Activated naive CD4-positive, alpha-beta T cell treated with anti-CD3 and anti-CD28 coated beads for 36 hours (primary cell): ENCODE measurements at regions of chr4 and their contacts with region 1.

Region 1: GRCh38 chr4:2963175-2963965 is at the starts of genes GRK4 and NOP14:
- DNase-seq: peak; percentile 98
- H3K4me3 Mint-ChIP-seq: peak within 1 kb of the TSS; percentile 80
- H3K27ac Mint-ChIP-seq: peak within 1 kb of the TSS; percentile 85
- H3K4me1 Mint-ChIP-seq: peaks cover 29% of the 10 kb centered on the region
- H3K27me3 Mint-ChIP-seq: no peaks in the 10 kb centered on the region
- total RNA-seq, gene GRK4: 1.3 to 2.1 TPM
- total RNA-seq, gene NOP14: 48.3 to 55.1 TPM

Region 2: DNA sequence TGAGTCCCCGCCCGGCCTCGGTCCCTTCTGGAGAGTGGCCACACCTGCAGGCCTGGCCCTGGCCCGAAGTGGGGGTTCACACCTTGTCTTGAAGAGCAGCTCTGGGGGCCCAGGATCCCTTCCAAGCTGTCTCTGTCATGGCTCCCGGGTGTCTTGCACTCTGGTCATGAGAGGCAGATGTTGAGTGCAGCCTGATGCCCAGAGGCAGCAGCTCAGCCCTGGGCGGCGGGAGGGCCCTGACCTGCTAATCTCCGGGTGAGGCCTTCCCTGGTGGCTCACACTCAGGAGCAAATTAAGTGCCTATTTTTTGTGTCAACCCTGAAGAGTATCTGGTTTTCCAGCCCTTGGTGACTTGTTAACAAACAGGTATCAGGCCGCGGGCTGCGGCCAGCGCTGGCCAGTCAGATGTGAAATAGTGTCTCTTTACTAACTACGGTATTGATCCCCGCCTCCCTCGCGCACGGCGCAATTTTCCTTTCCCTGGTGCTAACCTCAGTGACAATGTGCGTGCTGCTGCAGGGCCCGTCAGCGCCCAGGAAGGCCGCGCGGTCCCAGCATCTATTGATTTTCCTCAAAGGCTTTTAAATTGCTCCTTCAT is 1581.3 kb before region 1 on chr4:
- CTCF ChIA-PET with region 1: no interaction called
- intact Hi-C with region 1: no loop called
- DNase-seq: no peak
- H3K4me3 Mint-ChIP-seq: no peak overlapping the region
- H3K27ac Mint-ChIP-seq: no peak overlapping the region
- H3K4me1 Mint-ChIP-seq: no peaks in the 10 kb centered on the region
- H3K27me3 Mint-ChIP-seq: no peaks in the 10 kb centered on the region

Region 3: DNA sequence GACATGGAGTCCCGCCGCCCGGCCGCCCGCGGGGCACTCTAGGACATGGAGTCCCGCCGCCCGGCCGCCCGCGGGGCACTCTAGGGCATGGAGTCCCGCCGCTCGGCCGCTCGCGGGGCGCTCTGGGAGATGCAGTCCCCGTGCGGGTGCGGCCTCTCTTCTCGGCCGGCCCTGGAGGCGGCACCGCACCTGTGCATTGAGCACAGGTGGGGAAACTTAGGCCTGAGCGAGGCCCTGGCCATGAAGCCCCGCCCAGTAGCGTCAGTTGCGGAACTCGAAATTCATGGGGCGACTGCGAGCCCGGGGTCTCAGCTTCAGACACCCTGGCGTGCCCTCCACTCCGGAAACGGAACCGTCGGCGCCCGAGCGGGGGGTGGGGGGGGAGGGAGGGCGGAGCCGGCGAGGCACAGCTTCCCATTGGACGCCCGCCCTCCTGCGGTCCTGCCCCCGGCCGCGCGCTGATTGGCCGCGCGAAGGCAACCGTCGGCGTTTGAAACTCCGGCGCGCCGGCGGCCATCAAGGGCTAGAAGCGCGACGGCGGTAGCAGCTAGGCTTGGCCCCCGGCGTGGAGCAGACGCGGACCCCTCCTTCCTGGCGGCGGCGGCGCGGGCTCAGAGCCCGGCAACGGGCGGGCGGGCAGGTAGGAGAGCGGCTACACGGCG is 1242.2 kb before region 1 on chr4 and contains the starts of genes TACC3 and TMEM129:
- CTCF ChIA-PET with region 1: no interaction called
- intact Hi-C with region 1: loop called (anchors 2 kb)
- DNase-seq: peak; percentile 96
- H3K4me3 Mint-ChIP-seq: peak within 1 kb of the TSS; percentile 94
- H3K27ac Mint-ChIP-seq: peak within 1 kb of the TSS; percentile 98
- H3K4me1 Mint-ChIP-seq: peaks cover 53% of the 10 kb centered on the region
- H3K27me3 Mint-ChIP-seq: no peaks in the 10 kb centered on the region
- total RNA-seq, gene TACC3: 246 to 264 TPM
- total RNA-seq, gene TMEM129: 19.0 to 19.8 TPM

Region 4: GRCh38 chr4:2262143-2262943 is 701.0 kb before region 1 on chr4:
- CTCF ChIA-PET with region 1: no interaction called
- intact Hi-C with region 1: loop called (anchors 1 kb)
- DNase-seq: peak; percentile 98
- H3K4me3 Mint-ChIP-seq: peak overlapping the region; percentile 69
- H3K27ac Mint-ChIP-seq: no peak overlapping the region
- H3K4me1 Mint-ChIP-seq: peaks cover 2% of the 10 kb centered on the region
- H3K27me3 Mint-ChIP-seq: no peaks in the 10 kb centered on the region

Region 5: DNA sequence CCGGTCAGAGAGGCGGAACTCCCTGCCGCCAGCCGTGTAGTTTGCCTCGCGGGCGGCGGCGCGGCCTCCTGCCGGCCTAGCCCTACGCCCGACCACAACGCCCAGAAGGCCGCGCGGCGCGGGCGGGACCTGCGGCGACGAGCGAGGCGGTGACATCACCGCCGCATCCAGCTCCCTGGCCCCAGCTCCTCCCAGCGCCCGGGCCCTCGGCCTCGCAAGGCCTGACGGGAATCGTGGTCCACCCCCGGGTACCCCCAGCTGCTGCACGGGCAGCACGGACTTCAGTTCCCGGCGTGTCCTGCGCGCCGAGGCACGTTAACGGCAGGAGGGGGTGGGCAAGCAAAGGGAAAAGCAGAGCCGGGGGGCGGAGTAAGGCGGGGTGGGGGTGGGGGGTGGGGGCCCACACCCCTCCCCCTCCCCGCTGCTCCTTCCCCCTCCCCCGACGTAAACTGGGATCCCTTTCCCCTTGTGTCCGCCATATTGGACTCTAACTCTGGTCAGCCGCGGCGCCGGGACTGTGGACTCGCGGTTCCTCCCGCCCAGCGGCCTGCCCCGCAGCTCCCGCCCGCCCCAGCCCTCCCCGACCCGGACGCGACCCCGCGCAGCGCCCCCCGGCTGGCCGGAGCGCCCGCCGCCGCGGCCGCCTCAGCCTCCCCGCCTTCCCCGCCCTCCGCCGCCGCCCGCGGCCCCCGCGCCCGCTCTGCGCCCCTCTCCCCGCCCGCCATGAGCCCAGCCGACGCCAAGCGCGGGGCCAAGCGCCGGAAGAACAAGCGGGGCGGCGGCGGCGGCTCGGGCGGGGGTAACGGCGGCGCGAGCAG is 427.0 kb before region 1 on chr4 and contains the start of gene FAM193A:
- CTCF ChIA-PET with region 1: no interaction called
- intact Hi-C with region 1: loop called (anchors 1 kb)
- DNase-seq: peak; percentile 99
- H3K4me3 Mint-ChIP-seq: peak within 1 kb of the TSS; percentile 86
- H3K27ac Mint-ChIP-seq: peak within 1 kb of the TSS; percentile 83
- H3K4me1 Mint-ChIP-seq: peaks cover 18% of the 10 kb centered on the region
- H3K27me3 Mint-ChIP-seq: no peaks in the 10 kb centered on the region
- total RNA-seq, gene FAM193A: 20.1 to 20.4 TPM

Region 6: GRCh38 chr4:2934813-2935761 is 28.3 kb before region 1 on chr4:
- CTCF ChIA-PET with region 1: interaction called, 3 read pairs
- intact Hi-C with region 1: loop called (anchors 1 kb)
- DNase-seq: peak; percentile 97
- H3K4me3 Mint-ChIP-seq: peak overlapping the region; percentile 89
- H3K27ac Mint-ChIP-seq: peak overlapping the region; percentile 96
- H3K4me1 Mint-ChIP-seq: peaks cover 57% of the 10 kb centered on the region
- H3K27me3 Mint-ChIP-seq: no peaks in the 10 kb centered on the region

Region 7: GRCh38 chr4:3074078-3074795 is 110.9 kb after region 1 on chr4 and contains the starts of genes HTT and HTT-AS:
- CTCF ChIA-PET with region 1: interaction called, 6 read pairs
- intact Hi-C with region 1: loop called (anchors 1 kb)
- DNase-seq: peak; percentile 99
- H3K4me3 Mint-ChIP-seq: peak within 1 kb of the TSS; percentile 83
- H3K27ac Mint-ChIP-seq: peak within 1 kb of the TSS; percentile 87
- H3K4me1 Mint-ChIP-seq: peaks cover 27% of the 10 kb centered on the region
- H3K27me3 Mint-ChIP-seq: no peaks in the 10 kb centered on the region
- total RNA-seq, gene HTT: 91.6 to 94.1 TPM
- total RNA-seq, gene HTT-AS: not detected

Region 8: DNA sequence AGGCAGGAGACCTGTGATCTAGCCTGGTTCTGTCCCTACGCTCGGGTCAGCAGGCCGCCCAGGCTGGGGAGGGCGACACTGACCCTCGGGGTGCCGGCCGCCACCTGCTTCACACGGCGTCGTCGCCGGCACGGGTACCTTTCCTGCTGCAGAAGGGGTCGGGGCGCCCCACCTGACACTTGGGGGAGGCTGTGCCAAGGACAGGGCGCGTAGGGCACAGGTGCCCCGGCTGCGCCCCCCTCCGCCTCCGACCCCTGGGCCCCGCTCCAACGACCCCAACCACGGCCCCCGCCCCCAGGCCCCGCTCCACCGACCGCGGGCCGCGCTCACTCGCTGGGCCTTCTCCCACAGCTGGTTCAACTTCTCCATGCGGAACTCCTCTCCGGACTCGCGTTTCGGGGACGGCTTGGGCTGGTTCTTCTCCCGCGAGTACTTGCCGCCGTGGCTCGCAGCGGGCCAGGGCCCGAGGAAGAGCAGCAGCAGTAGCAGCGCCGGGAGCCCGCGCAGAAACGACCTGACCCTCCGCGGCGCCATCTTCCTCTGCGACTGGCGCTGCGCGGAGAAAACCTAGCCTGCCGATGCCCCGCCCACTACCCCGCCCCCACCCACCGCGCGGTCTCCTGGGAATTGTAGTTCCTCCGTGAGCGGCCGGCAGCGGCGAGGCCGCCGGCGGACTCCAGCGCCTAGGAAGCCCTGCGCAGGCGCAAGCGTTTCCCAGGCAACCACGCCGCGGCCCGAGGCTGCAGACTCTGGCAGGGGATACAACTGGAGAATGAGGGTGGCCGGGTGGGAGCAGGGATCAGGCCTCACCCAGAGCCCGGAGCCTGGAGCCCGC is 568.7 kb after region 1 on chr4 and contains the start of gene LRPAP1:
- CTCF ChIA-PET with region 1: no interaction called
- intact Hi-C with region 1: loop called (anchors 5 kb)
- DNase-seq: peak; percentile 83
- H3K4me3 Mint-ChIP-seq: peak within 1 kb of the TSS; percentile 100
- H3K27ac Mint-ChIP-seq: peak within 1 kb of the TSS; percentile 90
- H3K4me1 Mint-ChIP-seq: peaks cover 32% of the 10 kb centered on the region
- H3K27me3 Mint-ChIP-seq: peaks cover 6% of the 10 kb centered on the region
- total RNA-seq, gene LRPAP1: 50.2 TPM